ENCODE measurements at regions of chr4 and their contacts with region 1.

Region 1: GRCh38 chr4:148103597-148104355 is 338.4 kb downstream of the NR3C2 start:
- DNase-seq: no peak
- H3K4me3 ChIP-seq: no peak overlapping the region
- H3K27ac ChIP-seq: no peak overlapping the region
- H3K4me1 ChIP-seq: no peaks in the 10 kb centered on the region
- H3K27me3 ChIP-seq: no peaks in the 10 kb centered on the region
- CTCF ChIP-seq: no peak
- POLR2A ChIP-seq: no peak

Region 2: DNA sequence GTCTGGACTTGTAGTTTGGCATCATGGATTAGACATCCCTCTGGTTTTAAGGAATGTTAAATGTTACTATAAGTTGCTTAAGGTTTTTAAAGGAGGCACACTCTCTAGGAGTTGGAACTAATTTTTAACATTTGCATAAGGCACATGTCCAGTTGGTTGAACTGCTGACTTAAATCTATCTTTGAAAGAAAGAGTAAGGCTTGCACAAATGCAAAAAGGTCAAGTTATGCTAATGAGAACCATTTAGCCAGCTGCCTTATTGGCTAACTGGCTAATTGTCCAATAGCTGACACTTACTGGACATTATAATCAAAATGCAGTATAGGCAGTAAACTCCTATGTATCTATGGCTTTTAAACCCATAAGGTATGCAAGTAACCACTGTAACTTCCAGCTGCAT is 952.0 kb before region 1 on chr4:
- intact Hi-C with region 1: no loop called
- DNase-seq: no peak
- H3K4me3 ChIP-seq: no peak overlapping the region
- H3K27ac ChIP-seq: no peak overlapping the region
- H3K4me1 ChIP-seq: no peaks in the 10 kb centered on the region
- H3K27me3 ChIP-seq: no peaks in the 10 kb centered on the region
- CTCF ChIP-seq: no peak
- POLR2A ChIP-seq: no peak

Region 3: DNA sequence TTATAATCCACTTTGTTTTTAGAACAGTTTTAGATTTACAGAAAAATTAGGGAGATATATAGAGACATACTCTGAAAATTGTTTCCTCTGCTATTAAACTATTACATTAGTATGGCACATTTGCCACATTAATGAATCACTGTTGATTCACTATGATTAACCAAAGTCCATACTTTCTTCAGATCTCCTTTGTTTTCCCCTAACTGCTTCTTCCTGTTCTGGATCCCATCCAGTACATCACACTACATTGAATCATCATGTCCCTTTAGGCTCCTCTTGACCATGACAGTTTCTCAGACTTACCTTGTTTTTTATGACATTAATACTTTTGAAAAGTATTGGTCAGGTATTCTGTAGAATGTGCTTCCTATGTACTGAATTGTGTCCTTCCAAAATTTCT is 732.1 kb before region 1 on chr4:
- intact Hi-C with region 1: loop called (anchors 5 kb)
- DNase-seq: no peak
- H3K4me3 ChIP-seq: no peak overlapping the region
- H3K27ac ChIP-seq: no peak overlapping the region
- H3K4me1 ChIP-seq: no peaks in the 10 kb centered on the region
- H3K27me3 ChIP-seq: no peaks in the 10 kb centered on the region
- CTCF ChIP-seq: no peak
- POLR2A ChIP-seq: no peak

Measured in breast epithelium (tissue), 4 donors.